Psoas muscle (tissue), 8 donors: ENCODE measurements at regions of chr5 and their contacts with region 1.

Region 1: GRCh38 chr5:41835645-41836044 is 34.6 kb downstream of the OXCT1 start:
- DNase-seq: peak; percentile 36 to 67
- ATAC-seq: peak; percentile 93 to 100 (median 98)
- H3K4me3 ChIP-seq: no peak overlapping the region
- H3K27ac ChIP-seq: peak overlapping the region; percentile 56
- H3K4me1 ChIP-seq: no peaks in the 10 kb centered on the region
- H3K27me3 ChIP-seq: no peaks in the 10 kb centered on the region
- CTCF ChIP-seq: no peak

Region 2: DNA sequence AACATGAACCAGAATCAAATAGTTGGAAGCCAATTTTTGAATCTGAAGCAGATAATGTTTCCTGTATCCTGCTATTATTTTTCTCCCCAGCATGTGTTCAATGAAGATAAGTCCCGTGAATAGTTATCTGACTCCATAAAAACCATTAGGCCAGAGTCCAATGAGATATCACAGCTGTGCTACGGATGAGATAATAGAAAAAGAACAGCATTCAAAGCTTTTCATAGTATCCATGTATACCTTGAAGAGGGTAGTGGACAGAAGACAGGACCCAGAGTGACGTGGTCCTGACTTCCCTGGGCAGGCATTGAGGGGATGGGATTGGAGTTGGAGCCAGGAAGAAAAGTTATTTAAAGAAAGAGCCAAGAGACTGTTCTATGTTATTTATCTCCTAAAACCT is 571.6 kb before region 1 on chr5:
- intact Hi-C with region 1: loop called in 1 of 2 experiments (anchors 5 kb)
- DNase-seq: no peak
- ATAC-seq: no peak
- H3K4me3 ChIP-seq: no peak overlapping the region
- H3K27ac ChIP-seq: no peak overlapping the region
- H3K4me1 ChIP-seq: no peaks in the 10 kb centered on the region
- H3K27me3 ChIP-seq: no peaks in the 10 kb centered on the region
- CTCF ChIP-seq: no peak

Region 3: GRCh38 chr5:41893074-41893851 is 57.6 kb after region 1 on chr5:
- intact Hi-C with region 1: no loop called
- DNase-seq: no peak
- ATAC-seq: no peak
- H3K4me3 ChIP-seq: no peak overlapping the region
- H3K27ac ChIP-seq: no peak overlapping the region
- H3K4me1 ChIP-seq: no peaks in the 10 kb centered on the region
- H3K27me3 ChIP-seq: peaks cover 0 to 20% (median 6%) of the 10 kb centered on the region in 3 donors
- CTCF ChIP-seq: no peak

Region 4: GRCh38 chr5:42228279-42228678 is 392.6 kb after region 1 on chr5:
- intact Hi-C with region 1: no loop called
- DNase-seq: no peak
- ATAC-seq: peak in 1 of 4 donors; percentile 37
- H3K4me3 ChIP-seq: no peak overlapping the region
- H3K27ac ChIP-seq: no peak overlapping the region
- H3K4me1 ChIP-seq: no peaks in the 10 kb centered on the region
- H3K27me3 ChIP-seq: no peaks in the 10 kb centered on the region
- CTCF ChIP-seq: no peak